Transverse colon (tissue), 4 donors: ENCODE measurements at regions of chr4 and their contacts with region 1.

Region 1: DNA sequence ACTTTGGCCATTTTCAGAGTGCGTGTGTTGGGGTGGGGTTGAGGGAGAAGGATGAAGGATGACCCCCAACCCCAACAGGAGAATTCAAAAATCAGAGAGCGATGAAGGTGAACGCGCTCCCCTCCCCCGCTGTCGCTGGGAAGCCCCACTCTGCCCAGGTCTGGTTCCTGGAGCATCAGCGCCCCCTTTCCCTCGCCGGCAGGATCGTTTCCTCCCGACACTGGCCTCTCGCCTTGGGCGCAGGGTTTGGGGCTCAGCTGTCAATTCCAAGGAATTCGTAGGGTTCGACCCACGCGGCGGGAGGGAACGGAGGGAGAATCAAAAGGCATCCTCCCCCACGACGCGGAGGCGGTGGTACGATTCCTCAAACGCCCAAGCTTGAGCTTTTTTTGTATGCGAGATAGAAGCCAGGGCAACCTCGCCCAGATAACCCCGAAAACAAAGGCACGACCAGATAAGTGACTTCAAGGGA is 1.0 kb upstream of the PDGFRA start:
- DNase-seq: peak; percentile 68
- H3K4me3 ChIP-seq: peak overlapping the region in 3 of 4 donors; percentile 10 to 46 (median 24)
- H3K27ac ChIP-seq: peak overlapping the region; percentile 54 to 73 (median 64)
- H3K4me1 ChIP-seq: peaks cover 11 to 67% (median 46%) of the 10 kb centered on the region in 4 donors
- H3K27me3 ChIP-seq: peaks cover 100% of the 10 kb centered on the region
- CTCF ChIP-seq: peak; percentile 53 to 59 (median 55)
- EP300 ChIP-seq: no peak
- POLR2A ChIP-seq: no peak

Region 2: GRCh38 chr4:53196882-53197771 is 1031.0 kb before region 1 on chr4:
- in situ Hi-C with region 1: loop called in 3 of 4 experiments (anchors 10 to 25 kb)
- intact Hi-C with region 1: loop called (anchors 5 kb)
- DNase-seq: no peak
- H3K4me3 ChIP-seq: no peak overlapping the region
- H3K27ac ChIP-seq: no peak overlapping the region
- H3K4me1 ChIP-seq: no peaks in the 10 kb centered on the region
- H3K27me3 ChIP-seq: no peaks in the 10 kb centered on the region
- CTCF ChIP-seq: peak; percentile 67 to 78 (median 74)
- EP300 ChIP-seq: no peak
- POLR2A ChIP-seq: no peak

Region 3: GRCh38 chr4:53748328-53748772 is 479.7 kb before region 1 on chr4:
- in situ Hi-C with region 1: no loop called
- intact Hi-C with region 1: no loop called
- DNase-seq: peak; percentile 43
- H3K4me3 ChIP-seq: no peak overlapping the region
- H3K27ac ChIP-seq: no peak overlapping the region
- H3K4me1 ChIP-seq: no peaks in the 10 kb centered on the region
- H3K27me3 ChIP-seq: no peaks in the 10 kb centered on the region
- CTCF ChIP-seq: no peak
- EP300 ChIP-seq: no peak
- POLR2A ChIP-seq: no peak

Region 4: DNA sequence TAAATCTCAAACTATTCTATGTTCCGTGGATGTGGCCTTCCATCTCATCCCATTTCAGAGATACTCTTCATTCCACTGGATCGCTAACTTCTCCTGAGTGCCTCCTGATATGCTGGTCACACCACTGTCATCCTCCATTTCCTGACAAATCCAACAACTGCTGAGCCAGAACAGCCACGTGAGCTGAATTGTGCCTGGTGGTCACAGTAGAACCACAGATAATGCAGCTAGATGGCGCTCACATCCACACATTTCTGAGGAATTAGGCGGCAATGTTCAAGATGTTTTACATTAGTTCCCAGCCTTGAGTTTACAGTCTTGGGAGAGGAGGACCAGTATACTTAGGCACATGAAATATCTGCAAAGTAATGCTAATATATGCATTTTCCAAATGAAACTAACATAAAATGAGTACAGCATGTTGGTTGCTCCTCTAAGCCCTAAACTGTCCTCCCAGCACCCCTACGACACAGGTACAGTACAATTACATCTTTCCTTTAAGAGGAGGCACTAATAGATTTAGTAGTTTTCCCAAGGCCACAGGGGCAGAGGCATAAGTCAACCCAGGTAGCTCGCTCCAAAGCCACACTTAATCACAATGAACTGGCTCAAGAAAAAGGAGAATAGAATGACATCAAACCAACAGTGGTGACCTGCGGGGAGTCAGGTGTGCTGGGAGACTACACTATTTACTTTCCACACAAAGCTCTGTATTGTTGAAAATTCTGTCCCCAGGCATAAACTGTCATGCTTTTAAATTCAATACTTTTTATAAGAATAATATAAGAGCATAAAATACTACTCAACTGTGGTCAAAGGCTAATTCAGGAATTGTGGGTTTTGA is 297.9 kb before region 1 on chr4:
- in situ Hi-C with region 1: loop called in 2 of 4 experiments (anchors 10 kb)
- intact Hi-C with region 1: no loop called
- DNase-seq: peak; percentile 69
- H3K4me3 ChIP-seq: no peak overlapping the region
- H3K27ac ChIP-seq: no peak overlapping the region
- H3K4me1 ChIP-seq: no peaks in the 10 kb centered on the region
- H3K27me3 ChIP-seq: peaks cover 15% of the 10 kb centered on the region
- CTCF ChIP-seq: peak; percentile 59 to 77 (median 64)
- EP300 ChIP-seq: no peak
- POLR2A ChIP-seq: no peak

Region 5: GRCh38 chr4:54064295-54065111 is 163.6 kb before region 1 on chr4 and contains the start of gene CHIC2:
- in situ Hi-C with region 1: no loop called
- intact Hi-C with region 1: loop called (anchors 10 kb)
- DNase-seq: peak; percentile 96
- H3K4me3 ChIP-seq: peak within 1 kb of the TSS; percentile 86 to 99 (median 96)
- H3K27ac ChIP-seq: peak within 1 kb of the TSS; percentile 95 to 98 (median 97)
- H3K4me1 ChIP-seq: peaks cover 14 to 50% (median 31%) of the 10 kb centered on the region in 4 donors
- H3K27me3 ChIP-seq: no peaks in the 10 kb centered on the region
- CTCF ChIP-seq: no peak
- EP300 ChIP-seq: peak; percentile 61
- POLR2A ChIP-seq: peak; percentile 97
- total RNA-seq, gene CHIC2: 36.2 to 106 (median 52.0) TPM